ENCODE measurements at regions of chr4 and their contacts with region 1.

Region 1: DNA sequence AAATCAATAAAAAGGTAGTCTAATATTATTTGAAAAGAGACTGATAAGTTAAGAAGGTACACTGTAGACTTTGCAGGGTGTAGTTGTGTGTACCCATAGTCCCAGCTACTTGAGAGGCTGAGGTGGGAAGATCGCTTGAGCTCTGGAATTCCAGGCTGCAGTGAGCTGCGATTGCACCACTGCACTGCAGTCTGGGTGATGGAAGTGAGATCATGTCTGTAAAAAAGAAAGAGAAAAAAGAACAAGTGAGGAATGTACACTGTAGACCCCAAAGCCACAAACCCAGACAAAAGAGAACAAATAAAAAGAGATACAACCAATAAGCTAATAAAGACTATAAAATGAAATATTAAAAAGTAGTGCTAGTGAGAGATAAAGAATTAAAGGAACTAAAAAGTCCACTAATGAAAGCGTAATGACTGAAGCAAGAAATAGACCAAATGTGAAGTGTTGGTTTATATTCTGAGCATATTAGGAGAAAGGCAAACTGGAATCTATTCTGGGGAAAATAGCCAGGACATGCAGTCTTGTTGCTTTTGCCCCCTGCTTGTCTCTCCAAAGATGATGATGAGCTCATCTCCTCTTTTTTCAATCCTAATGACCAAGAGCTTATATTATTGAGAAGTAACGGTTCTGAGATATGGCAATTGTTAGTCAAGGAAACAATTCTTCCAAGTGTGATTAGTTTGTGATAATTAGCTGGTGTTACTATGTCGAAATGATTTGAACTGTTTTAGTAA is 19.1 kb downstream of the GSX2 start:
- DNase-seq: no peak
- ATAC-seq: no peak
- H3K4me3 ChIP-seq: no peak overlapping the region
- H3K4me3 Mint-ChIP-seq: no peak overlapping the region
- H3K27ac ChIP-seq: no peak overlapping the region
- H3K27ac Mint-ChIP-seq: no peak overlapping the region
- H3K4me1 ChIP-seq: no peaks in the 10 kb centered on the region
- H3K4me1 Mint-ChIP-seq: no peaks in the 10 kb centered on the region
- H3K27me3 ChIP-seq: peaks cover 0 to 17% of the 10 kb centered on the region in 2 experiments
- H3K27me3 Mint-ChIP-seq: peaks cover 26 to 31% of the 10 kb centered on the region in 2 donors

Region 2: DNA sequence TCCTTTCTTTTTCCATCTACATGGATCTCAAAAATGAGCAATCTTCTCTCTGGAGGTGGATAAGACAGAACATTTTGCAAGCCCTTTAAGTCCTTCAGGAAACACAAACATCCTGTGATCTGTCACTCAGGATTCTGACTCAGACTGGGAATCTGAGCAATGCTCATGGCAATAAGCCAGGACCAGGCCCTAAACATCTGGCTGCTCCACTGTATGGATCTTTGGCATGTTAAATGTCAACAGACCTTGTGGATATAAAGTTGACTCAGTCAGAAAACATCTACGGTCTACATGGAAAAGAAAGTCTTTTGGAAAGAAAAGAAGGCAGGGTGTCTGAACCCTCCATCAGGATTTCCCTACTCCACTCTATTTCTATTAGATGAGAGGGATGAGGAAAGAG is 36.9 kb before region 1 on chr4:
- CTCF ChIA-PET with region 1: no interaction called
- POLR2A ChIA-PET with region 1: interaction called in 1 of 2 experiments, 10 read pairs
- DNase-seq: no peak
- ATAC-seq: no peak
- H3K4me3 ChIP-seq: no peak overlapping the region
- H3K4me3 Mint-ChIP-seq: no peak overlapping the region
- H3K27ac ChIP-seq: no peak overlapping the region
- H3K27ac Mint-ChIP-seq: no peak overlapping the region
- H3K4me1 ChIP-seq: no peaks in the 10 kb centered on the region
- H3K4me1 Mint-ChIP-seq: no peaks in the 10 kb centered on the region
- H3K27me3 ChIP-seq: peaks cover 5 to 6% of the 10 kb centered on the region in 2 experiments
- H3K27me3 Mint-ChIP-seq: peaks cover 13% of the 10 kb centered on the region in 2 donors